ENCODE measurements at regions of chr9 and their contacts with region 1.

Region 1: GRCh38 chr9:8486095-8486494 is 686.5 kb upstream of the DMAC1 start:
- DNase-seq: peak in 1 of 2 donors; percentile 20
- ATAC-seq: no peak
- H3K4me3 ChIP-seq: no peak overlapping the region
- H3K27ac ChIP-seq: no peak overlapping the region
- H3K4me1 ChIP-seq: no peaks in the 10 kb centered on the region
- H3K27me3 ChIP-seq: no peaks in the 10 kb centered on the region
- CTCF ChIP-seq: no peak
- POLR2A ChIP-seq: no peak

Region 2: GRCh38 chr9:8437876-8438275 is 48.2 kb before region 1 on chr9:
- in situ Hi-C with region 1: no loop called
- intact Hi-C with region 1: loop called (anchors 10 kb)
- DNase-seq: no peak
- ATAC-seq: no peak
- H3K4me3 ChIP-seq: no peak overlapping the region
- H3K27ac ChIP-seq: no peak overlapping the region
- H3K4me1 ChIP-seq: no peaks in the 10 kb centered on the region
- H3K27me3 ChIP-seq: no peaks in the 10 kb centered on the region
- CTCF ChIP-seq: no peak
- POLR2A ChIP-seq: no peak

Region 3: DNA sequence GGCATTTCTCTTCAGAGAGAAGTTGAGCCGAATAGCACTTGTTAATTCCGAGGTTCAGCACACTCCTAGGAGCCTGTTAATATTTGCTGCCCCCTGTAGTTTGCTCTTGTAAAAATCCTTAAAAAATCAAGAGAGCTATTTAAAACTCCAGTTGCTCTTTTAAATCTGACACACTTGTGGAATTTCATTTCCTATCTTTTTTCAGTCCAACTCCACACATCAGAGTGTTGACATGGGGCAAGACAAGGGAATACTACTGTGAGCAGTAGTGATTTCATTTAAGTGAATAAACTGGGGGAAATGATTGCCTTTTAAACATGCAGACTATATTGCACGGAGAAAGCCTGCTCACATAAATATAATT is 409.7 kb after region 1 on chr9:
- in situ Hi-C with region 1: loop called in 1 of 4 experiments (anchors 25 kb)
- intact Hi-C with region 1: no loop called
- DNase-seq: no peak
- ATAC-seq: peak in 1 of 2 donors; percentile 26
- H3K4me3 ChIP-seq: no peak overlapping the region
- H3K27ac ChIP-seq: no peak overlapping the region
- H3K4me1 ChIP-seq: no peaks in the 10 kb centered on the region
- H3K27me3 ChIP-seq: no peaks in the 10 kb centered on the region
- CTCF ChIP-seq: peak in 3 of 5 experiments; percentile 10 to 46 (median 45)
- POLR2A ChIP-seq: no peak